Heart left ventricle (tissue), 16 donors: ENCODE measurements at regions of chr3 and their contacts with region 1.

Region 1: DNA sequence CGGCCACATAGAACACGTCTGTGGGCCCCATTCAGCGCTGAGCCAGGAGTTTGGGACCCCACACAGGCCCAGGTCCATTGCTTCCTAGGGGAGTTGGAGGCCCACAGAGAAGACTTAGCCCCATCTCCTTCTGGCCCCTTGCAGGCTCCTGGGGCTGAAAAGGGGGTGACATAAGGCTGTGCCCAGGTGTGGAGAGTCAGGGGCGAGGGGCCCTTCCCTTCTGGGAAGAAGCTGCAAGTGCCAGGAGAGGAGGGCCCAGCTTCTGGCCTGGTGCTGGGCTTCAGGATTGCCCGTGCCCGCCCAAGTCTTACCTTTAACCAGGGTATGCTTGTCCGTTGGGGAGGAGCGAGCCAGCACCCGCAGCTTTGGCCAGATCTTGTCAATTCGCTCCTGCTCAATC is 28.9 kb upstream of the SEC13 start:
- DNase-seq: peak in 1 of 5 donors; percentile 30
- ATAC-seq: no peak
- H3K4me3 ChIP-seq: no peak overlapping the region
- H3K27ac ChIP-seq: no peak overlapping the region
- H3K4me1 ChIP-seq: peaks cover 0 to 12% (median 8%) of the 10 kb centered on the region in 12 donors
- H3K27me3 ChIP-seq: peaks cover 0 to 3% (median 0%) of the 10 kb centered on the region in 9 donors
- CTCF ChIP-seq: no peak
- POLR2A ChIP-seq: no peak

Region 2: DNA sequence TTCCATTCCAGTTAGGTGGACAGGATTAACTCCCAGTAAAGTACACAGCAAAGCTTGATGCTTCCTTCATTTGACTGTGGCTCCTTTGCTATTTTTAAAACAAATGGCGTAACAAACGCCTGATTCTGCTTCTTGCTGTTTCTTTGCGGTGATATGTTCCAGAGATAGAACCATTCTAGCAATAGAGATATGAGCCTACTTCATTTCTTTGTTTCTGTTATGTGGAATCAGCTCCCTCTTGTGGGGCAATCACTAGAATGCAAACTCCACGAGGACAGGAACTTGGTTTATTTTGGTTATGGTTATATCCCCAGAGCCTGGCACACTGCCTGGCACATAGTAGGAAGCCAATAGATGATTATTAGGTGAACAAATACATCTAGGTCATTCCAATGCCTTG is 343.7 kb after region 1 on chr3:
- intact Hi-C with region 1: loop called in 4 of 10 experiments (anchors 2 to 10 kb)
- DNase-seq: no peak
- ATAC-seq: no peak
- H3K4me3 ChIP-seq: no peak overlapping the region
- H3K27ac ChIP-seq: no peak overlapping the region
- H3K4me1 ChIP-seq: no peaks in the 10 kb centered on the region
- H3K27me3 ChIP-seq: peaks cover 0 to 14% (median 0%) of the 10 kb centered on the region in 9 donors
- CTCF ChIP-seq: peak in 8 of 12 donors; percentile 13 to 43 (median 30)
- POLR2A ChIP-seq: no peak

Region 3: GRCh38 chr3:10964537-10965167 is 614.9 kb after region 1 on chr3:
- intact Hi-C with region 1: no loop called
- DNase-seq: no peak
- ATAC-seq: peak in 1 of 4 donors; percentile 40
- H3K4me3 ChIP-seq: no peak overlapping the region
- H3K27ac ChIP-seq: no peak overlapping the region
- H3K4me1 ChIP-seq: peaks cover 0 to 4% (median 0%) of the 10 kb centered on the region in 12 donors
- H3K27me3 ChIP-seq: peaks cover 0 to 27% (median 0%) of the 10 kb centered on the region in 9 donors
- CTCF ChIP-seq: no peak
- POLR2A ChIP-seq: no peak